Activated T-helper 1 cell treated with anti-CD3 and anti-CD28 coated beads, Interleukin-12 subunit alpha, Interleukin-12 subunit beta, Interleukin-2, Interleukin-4 antibody, amounts not matched to agents 30 ng/mL and 10 ng/mL and 1 ng/mL, durations not matched to agents 14 hours and 24 hours and 36 hours (primary cell): ENCODE measurements at regions of chr2 and their contacts with region 1.

Region 1: GRCh38 chr2:55175254-55176025 is 56.7 kb downstream of the CLHC1 start:
- DNase-seq: no peak
- H3K4me3 Mint-ChIP-seq: no peak overlapping the region
- H3K27ac Mint-ChIP-seq: no peak overlapping the region
- H3K4me1 Mint-ChIP-seq: no peaks in the 10 kb centered on the region
- H3K27me3 Mint-ChIP-seq: no peaks in the 10 kb centered on the region

Region 2: DNA sequence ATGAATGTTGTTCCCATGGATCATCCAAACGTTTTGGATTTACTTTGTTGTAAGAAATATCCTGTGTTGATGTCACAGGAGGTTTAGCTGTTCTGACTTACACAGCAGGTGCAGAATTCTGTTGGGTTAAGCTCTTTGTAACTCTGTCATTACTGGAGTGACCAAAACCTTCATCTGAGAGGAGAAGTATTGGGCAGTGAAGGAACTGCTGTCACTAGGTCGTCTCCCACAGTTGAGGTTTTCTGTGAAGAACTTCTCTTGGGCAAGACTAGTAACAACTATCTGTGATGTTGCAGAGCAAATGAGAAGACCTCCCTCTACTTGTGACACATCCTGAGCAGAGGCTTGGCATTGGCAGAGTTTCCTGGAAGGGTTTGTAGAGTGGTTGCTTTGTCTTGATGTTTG is 716.4 kb before region 1 on chr2:
- intact Hi-C with region 1: no loop called
- DNase-seq: no peak
- H3K4me3 Mint-ChIP-seq: no peak overlapping the region
- H3K27ac Mint-ChIP-seq: no peak overlapping the region
- H3K4me1 Mint-ChIP-seq: peaks cover 19% of the 10 kb centered on the region
- H3K27me3 Mint-ChIP-seq: peaks cover 67% of the 10 kb centered on the region

Region 3: GRCh38 chr2:54763636-54764291 is 411.7 kb before region 1 on chr2:
- intact Hi-C with region 1: loop called (anchors 10 kb)
- DNase-seq: no peak
- H3K4me3 Mint-ChIP-seq: no peak overlapping the region
- H3K27ac Mint-ChIP-seq: no peak overlapping the region
- H3K4me1 Mint-ChIP-seq: peaks cover 11% of the 10 kb centered on the region
- H3K27me3 Mint-ChIP-seq: peaks cover 6% of the 10 kb centered on the region

Region 4: GRCh38 chr2:54899576-54900200 is 275.8 kb before region 1 on chr2:
- intact Hi-C with region 1: loop called (anchors 5 kb)
- DNase-seq: no peak
- H3K4me3 Mint-ChIP-seq: no peak overlapping the region
- H3K27ac Mint-ChIP-seq: no peak overlapping the region
- H3K4me1 Mint-ChIP-seq: peaks cover 24% of the 10 kb centered on the region
- H3K27me3 Mint-ChIP-seq: no peaks in the 10 kb centered on the region

Region 5: GRCh38 chr2:55014962-55015939 is 160.2 kb before region 1 on chr2:
- intact Hi-C with region 1: loop called (anchors 1 kb)
- DNase-seq: no peak
- H3K4me3 Mint-ChIP-seq: no peak overlapping the region
- H3K27ac Mint-ChIP-seq: no peak overlapping the region
- H3K4me1 Mint-ChIP-seq: peaks cover 22% of the 10 kb centered on the region
- H3K27me3 Mint-ChIP-seq: no peaks in the 10 kb centered on the region

Region 6: GRCh38 chr2:56217106-56217505 is 1041.7 kb after region 1 on chr2:
- intact Hi-C with region 1: no loop called
- DNase-seq: no peak
- H3K4me3 Mint-ChIP-seq: no peak overlapping the region
- H3K27ac Mint-ChIP-seq: no peak overlapping the region
- H3K4me1 Mint-ChIP-seq: no peaks in the 10 kb centered on the region
- H3K27me3 Mint-ChIP-seq: no peaks in the 10 kb centered on the region